CD14-positive monocyte (primary cell): ENCODE measurements at regions of chr14 and their contacts with region 1.

Region 1: DNA sequence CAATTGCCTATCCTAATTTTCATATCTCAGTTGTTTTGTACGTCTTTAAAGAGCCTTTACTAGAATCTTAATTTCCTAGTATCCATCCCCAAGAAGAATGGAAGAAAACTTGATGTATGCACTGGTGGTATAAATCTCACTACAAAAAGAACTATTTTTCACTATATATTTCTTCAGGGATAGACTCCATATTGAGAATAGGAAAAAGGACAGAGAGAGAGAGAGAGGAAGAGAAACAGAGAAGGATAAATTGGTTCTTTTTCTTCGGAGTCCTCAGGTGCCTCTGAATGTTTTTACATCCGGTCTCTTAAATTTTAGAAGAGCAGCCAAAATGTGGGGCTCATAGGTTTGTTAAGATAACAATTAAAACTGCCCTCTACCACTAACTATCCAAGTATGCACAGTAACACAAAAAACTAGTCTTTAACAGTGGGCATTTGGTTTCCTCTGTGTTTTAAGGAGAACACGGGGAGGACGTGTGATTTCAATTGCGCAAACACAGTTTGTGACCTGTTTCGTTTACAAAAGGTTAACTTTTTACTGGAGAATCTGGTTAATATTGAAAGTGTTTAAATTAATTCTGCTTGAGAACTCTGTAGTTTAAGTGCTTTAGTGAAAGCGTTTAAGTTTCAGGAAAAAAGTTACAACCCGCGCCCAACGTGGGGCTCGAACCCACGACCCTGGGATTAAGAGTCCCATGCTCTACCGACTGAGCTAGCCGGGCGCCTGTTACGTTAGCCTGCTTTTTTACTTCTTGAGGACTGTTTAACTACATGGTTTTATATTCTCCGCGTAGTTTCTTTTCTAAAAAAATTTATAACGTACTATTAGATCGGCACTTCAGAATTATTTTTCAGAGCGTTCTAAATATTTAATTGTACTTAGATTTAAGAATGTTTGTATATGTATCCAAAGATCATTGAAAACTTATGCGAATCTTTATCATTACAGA is 5.1 kb upstream of the PSMA3 start:
- DNase-seq: peak; percentile 71 to 91 (median 73)
- H3K4me3 ChIP-seq: peak overlapping the region; percentile 72 to 99 (median 87)
- H3K4me3 Mint-ChIP-seq: no peak overlapping the region
- H3K27ac ChIP-seq: peak overlapping the region in 1 of 2 donors; percentile 56
- H3K27ac Mint-ChIP-seq: no peak overlapping the region
- H3K4me1 ChIP-seq: peaks cover 5 to 24% of the 10 kb centered on the region in 2 donors
- H3K4me1 Mint-ChIP-seq: peaks cover 18% of the 10 kb centered on the region
- H3K27me3 ChIP-seq: no peaks in the 10 kb centered on the region
- H3K27me3 Mint-ChIP-seq: no peaks in the 10 kb centered on the region
- CTCF ChIP-seq: no peak

Region 2: GRCh38 chr14:58199726-58200479 is 39.6 kb before region 1 on chr14 and contains the start of gene ACTR10:
- intact Hi-C with region 1: loop called in 1 of 2 experiments (anchors 5 kb)
- DNase-seq: peak; percentile 61 to 72 (median 62)
- H3K4me3 ChIP-seq: peak within 1 kb of the TSS; percentile 69 to 89 (median 87)
- H3K4me3 Mint-ChIP-seq: peak within 1 kb of the TSS; percentile 97 to 98
- H3K27ac ChIP-seq: peak within 1 kb of the TSS; percentile 85 to 86
- H3K27ac Mint-ChIP-seq: peak within 1 kb of the TSS; percentile 95 to 99 (median 98)
- H3K4me1 ChIP-seq: peaks cover 15 to 20% of the 10 kb centered on the region in 2 donors
- H3K4me1 Mint-ChIP-seq: peaks cover 26% of the 10 kb centered on the region
- H3K27me3 ChIP-seq: no peaks in the 10 kb centered on the region
- H3K27me3 Mint-ChIP-seq: peaks cover 3 to 6% (median 4%) of the 10 kb centered on the region in 3 donors
- CTCF ChIP-seq: no peak
- polyA plus RNA-seq, gene ACTR10: 33.8 to 91.7 (median 83.3) TPM

Region 3: DNA sequence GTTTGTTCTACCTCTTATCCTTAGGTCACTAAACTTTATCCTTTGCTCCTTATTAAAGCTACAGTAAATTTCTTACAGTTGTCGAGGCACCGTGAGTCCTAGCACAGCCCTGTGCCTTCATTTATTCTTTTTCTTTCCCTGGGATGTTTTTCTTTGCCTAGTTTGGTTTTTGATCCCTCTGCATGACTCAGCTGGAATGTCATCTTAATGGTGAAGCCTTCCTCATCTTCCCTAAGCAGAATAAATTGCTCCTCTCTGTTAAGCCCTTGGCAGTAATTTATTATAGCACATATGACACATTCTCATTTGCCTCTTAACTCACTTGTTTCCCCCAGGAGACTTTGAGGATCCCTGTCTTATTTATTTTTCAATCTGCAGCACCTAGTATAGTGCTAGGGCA is 23.0 kb before region 1 on chr14:
- intact Hi-C with region 1: no loop called
- DNase-seq: no peak
- H3K4me3 ChIP-seq: no peak overlapping the region
- H3K4me3 Mint-ChIP-seq: no peak overlapping the region
- H3K27ac ChIP-seq: no peak overlapping the region
- H3K27ac Mint-ChIP-seq: peak overlapping the region in 1 of 7 donors; percentile 9
- H3K4me1 ChIP-seq: no peaks in the 10 kb centered on the region
- H3K4me1 Mint-ChIP-seq: no peaks in the 10 kb centered on the region
- H3K27me3 ChIP-seq: no peaks in the 10 kb centered on the region
- H3K27me3 Mint-ChIP-seq: no peaks in the 10 kb centered on the region
- CTCF ChIP-seq: no peak